Posterior cingulate gyrus (tissue), 11 donors: ENCODE measurements at regions of chrX and their contacts with region 1.

Region 1: DNA sequence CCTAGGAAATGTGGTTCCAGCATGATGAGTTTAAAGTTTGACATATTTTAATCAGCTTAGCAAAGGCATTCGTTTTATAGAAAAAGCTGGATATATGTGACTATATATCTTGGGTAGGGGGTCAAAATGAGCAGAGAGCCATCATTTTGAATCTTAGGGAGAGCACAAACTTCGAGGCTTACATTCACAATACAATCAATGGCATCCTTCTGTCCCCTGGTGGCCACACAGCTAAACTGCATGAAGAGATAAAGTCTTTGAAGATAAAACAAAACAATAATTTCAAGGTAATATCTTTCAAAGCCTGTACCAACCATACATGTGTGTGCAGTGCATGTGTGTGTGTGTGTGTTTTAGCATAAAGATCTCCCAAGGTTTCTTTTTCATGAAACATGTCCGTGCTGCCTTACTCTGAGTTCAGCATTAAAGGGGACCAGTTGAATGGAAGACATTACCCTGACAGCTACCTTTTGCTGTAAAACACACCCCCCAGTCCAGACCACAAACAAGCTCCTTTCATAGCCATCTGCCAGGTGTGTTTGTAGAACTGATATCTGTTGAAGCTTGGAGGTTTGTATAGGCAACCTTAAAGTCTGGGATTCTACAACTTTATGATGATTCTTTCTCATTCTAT is 22.0 kb downstream of the DYNLT3 start:
- DNase-seq: peak in 5 of 10 donors; percentile 18 to 55 (median 36)

Region 2: GRCh38 chrX:37509349-37509748 is 316.0 kb before region 1 on chrX:
- intact Hi-C with region 1: loop called (anchors 2 kb)
- DNase-seq: no peak

Region 3: DNA sequence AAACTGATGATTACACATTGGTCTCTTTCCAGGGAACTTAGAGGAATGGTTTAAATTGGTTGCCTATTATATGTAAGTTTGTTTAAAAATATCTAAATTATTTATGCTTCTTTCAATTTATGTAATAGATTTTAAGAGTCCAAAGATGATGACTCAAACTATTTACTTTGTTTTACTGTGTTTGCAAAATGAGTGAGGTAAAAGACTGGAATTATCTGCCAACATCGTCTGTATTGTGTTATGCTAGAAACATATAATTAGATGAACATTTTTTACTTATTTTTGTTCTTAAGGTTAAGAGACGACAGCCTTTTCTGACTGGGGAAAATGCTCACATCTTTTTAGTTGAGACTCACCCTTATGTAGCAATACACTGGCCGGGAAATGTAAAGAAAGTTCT is 129.9 kb after region 1 on chrX:
- intact Hi-C with region 1: no loop called
- DNase-seq: no peak